MCF 10A (cell line): ENCODE measurements at regions of chr9 and their contacts with region 1.

Region 1: DNA sequence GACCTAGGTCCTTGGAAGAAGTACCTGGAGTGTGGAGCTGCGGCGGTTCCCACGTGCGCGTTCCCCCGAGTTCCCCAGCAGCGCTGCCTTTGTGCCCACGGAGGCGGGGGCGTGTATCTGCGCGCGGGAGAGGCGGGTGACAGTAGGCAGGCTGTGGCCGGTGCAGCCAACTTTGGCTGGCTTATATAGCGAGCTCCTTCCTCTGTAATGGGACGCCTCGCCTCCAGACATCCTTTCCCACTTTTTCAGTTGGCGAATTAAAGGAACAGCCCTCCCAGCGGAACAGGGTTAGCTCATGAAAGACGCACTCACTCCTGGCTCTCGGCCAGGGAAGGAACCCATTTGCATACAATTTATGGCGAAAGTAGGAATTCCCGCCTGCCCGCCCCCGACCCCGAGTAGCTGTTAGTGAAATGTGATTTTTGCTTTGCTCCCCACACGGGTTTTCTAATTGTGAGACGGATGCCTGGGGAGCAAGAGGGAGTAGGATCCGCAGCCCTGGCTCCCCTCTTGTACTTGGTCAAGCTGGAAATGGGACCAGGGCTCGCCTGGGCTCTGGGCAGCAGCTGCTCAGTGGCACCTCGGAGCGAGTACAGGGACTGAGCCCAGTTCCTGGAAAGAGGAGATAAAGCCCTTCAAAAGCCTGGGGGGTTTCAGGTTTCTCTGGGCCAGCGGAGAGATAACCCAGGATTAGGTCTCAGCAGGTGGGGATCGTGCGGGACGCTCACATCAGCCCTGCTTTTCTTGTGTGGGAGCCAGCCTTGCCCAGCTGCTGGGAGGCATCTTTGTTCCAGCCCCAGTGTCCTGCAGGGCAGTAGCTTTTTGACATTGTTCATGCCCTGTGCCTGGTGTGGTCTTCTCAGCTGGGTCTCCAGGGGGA is at the start of gene TNC:
- DNase-seq: peak; percentile 93
- H3K4me3 Mint-ChIP-seq: peak within 1 kb of the TSS; percentile 74
- H3K27ac Mint-ChIP-seq: peak within 1 kb of the TSS; percentile 23
- H3K4me1 Mint-ChIP-seq: peaks cover 35% of the 10 kb centered on the region
- H3K27me3 Mint-ChIP-seq: no peaks in the 10 kb centered on the region
- CTCF ChIP-seq: no peak
- total RNA-seq, gene TNC: 49.8 and 82.4 TPM in 2 replicates

Region 2: DNA sequence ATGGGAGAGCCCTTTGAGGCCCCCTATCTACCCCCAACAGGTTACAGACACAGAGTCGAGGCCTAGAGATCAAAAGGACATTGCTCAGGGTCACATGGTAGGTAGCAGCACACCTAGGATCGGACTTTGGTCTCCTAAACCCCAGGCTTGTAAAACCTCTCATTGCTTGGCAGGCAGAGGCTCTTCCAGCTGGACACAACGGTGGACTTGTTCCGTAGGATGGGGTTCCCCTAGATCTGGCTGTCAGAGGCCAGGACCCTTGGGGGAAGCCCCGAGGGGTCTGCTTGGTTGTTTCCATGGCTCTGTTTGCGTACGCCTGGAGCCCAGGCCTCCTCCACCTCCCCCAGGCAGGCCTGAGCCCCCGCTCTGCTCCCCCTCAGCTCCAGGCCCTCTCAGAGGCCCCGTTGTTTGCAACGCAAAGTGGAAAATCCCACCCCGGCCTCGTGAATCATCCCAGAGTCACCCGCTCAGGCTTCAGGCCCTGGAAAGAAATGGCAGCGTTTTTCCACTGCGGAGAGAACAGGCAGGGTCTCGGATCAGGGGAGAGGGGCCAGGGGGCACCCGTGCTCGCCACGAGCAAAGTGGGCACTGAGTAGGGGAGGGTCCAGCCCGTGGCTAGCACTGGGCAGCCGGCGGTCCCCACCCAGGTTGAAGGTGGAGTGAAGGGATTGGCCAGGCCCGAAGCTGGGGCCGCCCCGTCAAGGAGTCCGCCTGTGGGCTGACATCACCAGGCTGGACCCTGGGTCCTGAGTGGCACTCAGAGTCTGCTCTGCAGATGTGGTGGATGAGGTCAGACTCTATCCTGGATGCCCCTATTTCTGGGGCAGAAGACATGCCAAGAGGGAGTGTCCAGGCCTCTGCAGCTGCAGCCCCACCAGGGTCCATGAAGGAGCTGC is 943.1 kb before region 1 on chr9:
- CTCF ChIA-PET with region 1: no interaction called
- POLR2A ChIA-PET with region 1: no interaction called
- intact Hi-C with region 1: no loop called
- DNase-seq: no peak
- H3K4me3 Mint-ChIP-seq: no peak overlapping the region
- H3K27ac Mint-ChIP-seq: no peak overlapping the region
- H3K4me1 Mint-ChIP-seq: peaks cover 10% of the 10 kb centered on the region
- H3K27me3 Mint-ChIP-seq: no peaks in the 10 kb centered on the region
- CTCF ChIP-seq: no peak

Region 3: DNA sequence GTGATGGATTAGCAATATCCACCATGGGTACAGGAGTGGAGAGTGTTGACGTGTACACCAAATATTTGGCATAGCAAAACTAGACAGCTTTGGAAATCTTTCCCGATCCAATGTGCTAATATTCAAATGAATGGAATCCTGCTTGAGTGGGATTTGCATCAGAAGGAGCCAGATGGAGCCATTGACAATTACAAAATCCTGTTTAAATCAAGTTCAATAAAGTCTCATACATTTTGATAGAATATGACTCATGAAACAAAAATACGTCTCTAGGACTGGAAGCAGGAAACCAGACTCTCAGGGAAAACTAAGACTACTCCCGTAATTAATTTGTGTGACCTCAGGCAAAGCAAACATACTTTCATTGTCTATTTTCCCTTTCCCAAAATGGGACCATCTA is 13.3 kb before region 1 on chr9:
- CTCF ChIA-PET with region 1: interaction called, 4 read pairs
- POLR2A ChIA-PET with region 1: interaction called, 25 read pairs
- intact Hi-C with region 1: no loop called
- DNase-seq: peak; percentile 26
- H3K4me3 Mint-ChIP-seq: no peak overlapping the region
- H3K27ac Mint-ChIP-seq: peak overlapping the region; percentile 85
- H3K4me1 Mint-ChIP-seq: peaks cover 26% of the 10 kb centered on the region
- H3K27me3 Mint-ChIP-seq: no peaks in the 10 kb centered on the region
- CTCF ChIP-seq: no peak

Region 4: GRCh38 chr9:115157245-115157674 is 39.0 kb after region 1 on chr9:
- CTCF ChIA-PET with region 1: no interaction called
- POLR2A ChIA-PET with region 1: interaction called, 9 read pairs
- intact Hi-C with region 1: loop called (anchors 2 kb)
- DNase-seq: peak; percentile 77
- H3K4me3 Mint-ChIP-seq: no peak overlapping the region
- H3K27ac Mint-ChIP-seq: peak overlapping the region; percentile 73
- H3K4me1 Mint-ChIP-seq: peaks cover 15% of the 10 kb centered on the region
- H3K27me3 Mint-ChIP-seq: no peaks in the 10 kb centered on the region
- CTCF ChIP-seq: no peak

Region 5: GRCh38 chr9:115170358-115171073 is 52.3 kb after region 1 on chr9:
- CTCF ChIA-PET with region 1: no interaction called
- POLR2A ChIA-PET with region 1: interaction called, 7 read pairs
- intact Hi-C with region 1: loop called (anchors 2 kb)
- DNase-seq: peak; percentile 90
- H3K4me3 Mint-ChIP-seq: no peak overlapping the region
- H3K27ac Mint-ChIP-seq: peak overlapping the region; percentile 46
- H3K4me1 Mint-ChIP-seq: peaks cover 26% of the 10 kb centered on the region
- H3K27me3 Mint-ChIP-seq: no peaks in the 10 kb centered on the region
- CTCF ChIP-seq: no peak

Region 6: DNA sequence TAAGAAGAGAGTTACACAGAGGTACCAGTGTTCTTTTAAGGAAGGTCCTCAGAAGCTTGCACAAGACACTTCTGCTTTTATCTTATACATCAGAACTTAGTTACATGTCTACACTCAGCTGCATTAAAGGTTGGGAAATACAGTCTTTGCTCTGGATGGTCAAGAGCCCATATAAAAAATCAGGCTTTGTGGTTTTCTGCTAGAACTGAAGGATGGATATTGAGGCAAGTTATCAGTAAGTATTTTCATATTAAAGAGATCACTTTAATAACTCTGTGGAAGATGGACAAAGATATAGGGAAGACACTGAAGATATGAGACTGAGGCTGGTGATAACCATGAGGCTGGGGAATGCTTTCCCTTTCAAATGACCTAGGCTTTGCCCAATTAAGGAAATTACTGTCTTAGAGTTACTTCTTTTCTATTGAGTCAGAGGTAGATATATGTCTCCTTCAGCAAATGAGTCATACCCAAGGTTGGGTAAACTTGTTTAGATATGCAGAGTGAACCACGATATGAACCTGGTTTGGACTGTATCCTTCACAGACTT is 86.7 kb after region 1 on chr9:
- CTCF ChIA-PET with region 1: no interaction called
- POLR2A ChIA-PET with region 1: no interaction called
- intact Hi-C with region 1: loop called (anchors 2 kb)
- DNase-seq: peak; percentile 83
- H3K4me3 Mint-ChIP-seq: no peak overlapping the region
- H3K27ac Mint-ChIP-seq: peak overlapping the region; percentile 44
- H3K4me1 Mint-ChIP-seq: peaks cover 35% of the 10 kb centered on the region
- H3K27me3 Mint-ChIP-seq: no peaks in the 10 kb centered on the region
- CTCF ChIP-seq: no peak

Region 7: GRCh38 chr9:115262477-115262876 is 144.2 kb after region 1 on chr9:
- CTCF ChIA-PET with region 1: no interaction called
- POLR2A ChIA-PET with region 1: interaction called, 3 read pairs
- intact Hi-C with region 1: loop called (anchors 2 kb)
- DNase-seq: peak; percentile 97
- H3K4me3 Mint-ChIP-seq: no peak overlapping the region
- H3K27ac Mint-ChIP-seq: peak overlapping the region; percentile 52
- H3K4me1 Mint-ChIP-seq: peaks cover 45% of the 10 kb centered on the region
- H3K27me3 Mint-ChIP-seq: no peaks in the 10 kb centered on the region
- CTCF ChIP-seq: no peak